ENCODE measurements at regions of chr5 and their contacts with region 1.

Region 1: GRCh38 chr5:124748687-124749594 is 2.5 kb upstream of the ZNF608 start:
- DNase-seq: peak; percentile 88
- H3K4me3 ChIP-seq: peak overlapping the region; percentile 64 to 70 (median 68)
- H3K27ac ChIP-seq: peak overlapping the region; percentile 92 to 93 (median 93)
- H3K4me1 ChIP-seq: peaks cover 0 to 23% (median 7%) of the 10 kb centered on the region in 4 donors
- H3K27me3 ChIP-seq: no peaks in the 10 kb centered on the region
- CTCF ChIP-seq: peak in 1 of 4 experiments; percentile 13
- EP300 ChIP-seq: no peak
- POLR2A ChIP-seq: peak; percentile 24 to 62

Region 2: DNA sequence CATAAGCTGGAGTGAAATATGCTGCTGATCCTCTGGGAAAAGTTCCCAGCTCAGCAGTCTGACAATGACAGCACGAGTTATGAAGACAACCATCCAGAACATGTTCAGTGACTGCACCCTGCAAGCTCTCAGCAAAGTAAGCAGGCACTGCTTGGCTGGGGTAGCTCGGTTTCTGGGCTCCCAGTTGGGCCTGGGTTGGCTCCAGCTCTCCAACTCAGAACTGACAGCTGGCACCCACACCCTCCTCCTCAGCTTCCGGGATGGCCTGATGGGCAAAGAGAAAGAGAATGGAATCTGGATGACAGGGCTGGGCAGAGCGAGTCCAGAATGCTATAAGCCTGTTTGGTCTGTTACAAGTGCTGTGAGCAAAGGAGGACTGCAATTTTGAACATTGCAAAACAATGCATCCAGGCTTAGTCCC is 1052.0 kb before region 1 on chr5:
- intact Hi-C with region 1: loop called (anchors 10 kb)
- DNase-seq: peak; percentile 85
- H3K4me3 ChIP-seq: no peak overlapping the region
- H3K27ac ChIP-seq: peak overlapping the region; percentile 32 to 78 (median 70)
- H3K4me1 ChIP-seq: peaks cover 0 to 37% (median 25%) of the 10 kb centered on the region in 4 donors
- H3K27me3 ChIP-seq: no peaks in the 10 kb centered on the region
- CTCF ChIP-seq: no peak
- EP300 ChIP-seq: no peak
- POLR2A ChIP-seq: no peak

Region 3: GRCh38 chr5:124444147-124444775 is 304.7 kb before region 1 on chr5:
- intact Hi-C with region 1: no loop called
- DNase-seq: no peak
- H3K4me3 ChIP-seq: no peak overlapping the region
- H3K27ac ChIP-seq: no peak overlapping the region
- H3K4me1 ChIP-seq: no peaks in the 10 kb centered on the region
- H3K27me3 ChIP-seq: no peaks in the 10 kb centered on the region
- CTCF ChIP-seq: no peak
- EP300 ChIP-seq: no peak
- POLR2A ChIP-seq: no peak

Region 4: DNA sequence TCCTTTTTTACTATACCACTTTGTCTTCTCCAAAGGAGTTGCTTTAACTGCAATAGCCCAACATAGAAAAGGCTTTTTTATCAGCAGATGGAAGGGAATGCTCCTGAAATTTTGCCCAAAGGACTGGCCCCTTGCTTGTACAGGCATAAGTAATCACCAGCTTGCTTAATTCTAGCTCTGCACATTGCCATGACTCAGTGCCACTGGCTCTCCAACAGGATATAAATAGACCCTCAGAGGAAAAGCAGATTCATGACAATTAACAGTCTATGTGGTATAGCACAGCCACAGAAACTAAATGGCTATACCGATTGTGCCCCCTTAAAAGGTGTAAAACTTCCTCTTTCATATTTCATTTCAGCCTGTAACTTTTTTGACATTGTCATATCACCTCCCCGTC is 229.5 kb before region 1 on chr5:
- intact Hi-C with region 1: loop called (anchors 5 kb)
- DNase-seq: no peak
- H3K4me3 ChIP-seq: no peak overlapping the region
- H3K27ac ChIP-seq: peak overlapping the region in 1 of 4 donors; percentile 48
- H3K4me1 ChIP-seq: peaks cover 0 to 40% (median 28%) of the 10 kb centered on the region in 4 donors
- H3K27me3 ChIP-seq: no peaks in the 10 kb centered on the region
- CTCF ChIP-seq: no peak
- EP300 ChIP-seq: no peak
- POLR2A ChIP-seq: no peak

Region 5: DNA sequence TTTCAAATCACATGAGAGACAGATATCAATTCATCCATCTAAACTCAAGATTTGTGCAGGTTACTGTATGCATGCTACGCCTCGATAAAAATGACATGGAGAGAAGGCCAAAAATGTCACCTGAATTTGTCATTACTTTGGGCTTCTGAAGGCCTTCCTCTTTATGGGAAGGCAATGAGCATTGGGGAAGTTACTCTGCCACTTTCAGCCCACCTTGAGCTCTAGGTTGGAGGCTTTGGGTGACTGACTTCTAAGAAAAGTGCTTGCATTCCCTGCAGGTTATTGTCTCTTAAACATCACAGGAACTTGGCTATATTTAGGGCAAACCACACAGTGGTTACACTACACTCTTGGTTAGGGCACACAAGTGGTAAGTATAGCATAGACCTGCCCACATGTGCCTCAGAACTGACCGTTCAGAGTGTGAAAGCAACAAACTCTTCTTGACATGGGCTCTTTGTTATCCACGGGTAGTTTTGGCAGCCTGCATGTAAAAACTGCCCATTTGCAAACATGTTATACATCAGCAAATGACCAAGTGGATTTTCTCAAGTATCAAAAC is 172.0 kb before region 1 on chr5:
- intact Hi-C with region 1: no loop called
- DNase-seq: no peak
- H3K4me3 ChIP-seq: no peak overlapping the region
- H3K27ac ChIP-seq: no peak overlapping the region
- H3K4me1 ChIP-seq: no peaks in the 10 kb centered on the region
- H3K27me3 ChIP-seq: no peaks in the 10 kb centered on the region
- CTCF ChIP-seq: no peak
- EP300 ChIP-seq: no peak
- POLR2A ChIP-seq: no peak

Region 6: GRCh38 chr5:124902097-124902821 is 153.3 kb after region 1 on chr5:
- intact Hi-C with region 1: loop called (anchors 5 kb)
- DNase-seq: no peak
- H3K4me3 ChIP-seq: no peak overlapping the region
- H3K27ac ChIP-seq: peak overlapping the region in 1 of 4 donors; percentile 25
- H3K4me1 ChIP-seq: peaks cover 0 to 27% (median 20%) of the 10 kb centered on the region in 4 donors
- H3K27me3 ChIP-seq: no peaks in the 10 kb centered on the region
- CTCF ChIP-seq: no peak
- EP300 ChIP-seq: no peak
- POLR2A ChIP-seq: no peak

Region 7: DNA sequence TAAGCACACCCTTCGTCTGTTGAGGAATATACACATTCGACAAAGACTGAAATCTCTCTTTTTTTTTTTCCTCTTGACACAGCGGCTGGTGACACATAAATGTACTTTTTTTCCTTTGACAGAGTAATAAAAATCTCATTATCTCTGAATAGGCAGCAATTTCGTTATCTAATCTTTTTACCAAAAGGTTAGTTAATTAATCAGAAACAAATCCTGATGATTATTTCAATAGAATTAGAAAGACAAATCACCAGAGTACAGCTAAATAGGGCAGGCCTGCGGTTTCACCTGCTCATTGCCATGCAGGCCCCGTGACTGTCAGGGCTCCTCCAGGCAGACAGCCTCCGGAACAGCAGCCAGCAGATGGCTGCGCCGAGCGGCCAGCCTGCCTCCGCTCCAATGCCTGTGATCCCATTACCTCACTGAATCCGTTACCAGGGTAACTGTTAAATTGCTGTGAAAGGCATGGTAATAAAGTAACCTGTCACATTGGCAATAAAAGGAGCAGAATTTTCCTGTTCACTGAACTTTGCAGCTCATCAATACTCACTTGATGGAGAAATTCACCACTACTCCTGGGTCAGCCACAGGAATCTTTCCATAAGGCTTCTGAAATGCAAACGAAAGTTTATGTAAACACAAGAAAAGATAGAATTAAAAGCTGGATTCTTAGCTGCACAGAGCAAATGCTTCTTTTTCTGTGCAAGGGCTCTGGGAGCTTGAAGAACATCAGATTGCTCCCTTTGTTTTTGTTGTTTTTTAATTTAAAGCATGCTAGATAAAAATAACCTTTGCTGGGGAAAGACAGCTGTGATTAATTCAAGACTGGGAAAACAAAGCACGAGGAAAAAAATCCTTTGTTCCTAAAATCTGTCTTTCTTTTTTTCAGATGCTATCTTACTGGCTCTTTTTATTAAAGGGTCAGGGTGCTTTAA is 663.9 kb after region 1 on chr5:
- intact Hi-C with region 1: loop called (anchors 2 kb)
- DNase-seq: peak; percentile 82
- H3K4me3 ChIP-seq: peak overlapping the region in 1 of 4 donors; percentile 1
- H3K27ac ChIP-seq: peak overlapping the region; percentile 66 to 84 (median 74)
- H3K4me1 ChIP-seq: peaks cover 0 to 64% (median 60%) of the 10 kb centered on the region in 4 donors
- H3K27me3 ChIP-seq: no peaks in the 10 kb centered on the region
- CTCF ChIP-seq: peak in 1 of 4 experiments; percentile 24
- EP300 ChIP-seq: peak in 1 of 4 donors; percentile 53
- POLR2A ChIP-seq: no peak

Region 8: DNA sequence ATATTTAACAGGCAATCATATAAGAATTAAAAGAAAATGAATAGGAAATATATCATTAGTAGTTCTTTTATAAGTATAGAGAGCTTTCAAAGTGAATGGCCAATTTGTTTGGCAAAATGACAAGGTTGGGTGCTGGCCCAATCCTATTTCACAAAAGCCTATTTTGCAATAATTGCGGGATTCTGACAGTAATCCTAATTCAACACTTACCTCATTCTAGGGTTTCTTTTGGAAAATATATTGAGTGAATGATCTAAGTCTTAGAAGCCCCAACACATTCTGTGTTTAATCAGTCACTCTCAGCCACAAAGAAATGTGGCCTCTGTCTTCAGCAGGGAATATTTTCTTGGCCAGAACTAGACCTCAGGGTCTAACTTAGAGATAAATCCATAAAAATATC is 833.4 kb after region 1 on chr5:
- intact Hi-C with region 1: loop called (anchors 10 kb)
- DNase-seq: no peak
- H3K4me3 ChIP-seq: no peak overlapping the region
- H3K27ac ChIP-seq: peak overlapping the region in 1 of 4 donors; percentile 69
- H3K4me1 ChIP-seq: peaks cover 0 to 38% (median 30%) of the 10 kb centered on the region in 4 donors
- H3K27me3 ChIP-seq: no peaks in the 10 kb centered on the region
- CTCF ChIP-seq: no peak
- EP300 ChIP-seq: no peak
- POLR2A ChIP-seq: no peak